ENCODE measurements at regions of chr12 and their contacts with region 1.

Region 1: DNA sequence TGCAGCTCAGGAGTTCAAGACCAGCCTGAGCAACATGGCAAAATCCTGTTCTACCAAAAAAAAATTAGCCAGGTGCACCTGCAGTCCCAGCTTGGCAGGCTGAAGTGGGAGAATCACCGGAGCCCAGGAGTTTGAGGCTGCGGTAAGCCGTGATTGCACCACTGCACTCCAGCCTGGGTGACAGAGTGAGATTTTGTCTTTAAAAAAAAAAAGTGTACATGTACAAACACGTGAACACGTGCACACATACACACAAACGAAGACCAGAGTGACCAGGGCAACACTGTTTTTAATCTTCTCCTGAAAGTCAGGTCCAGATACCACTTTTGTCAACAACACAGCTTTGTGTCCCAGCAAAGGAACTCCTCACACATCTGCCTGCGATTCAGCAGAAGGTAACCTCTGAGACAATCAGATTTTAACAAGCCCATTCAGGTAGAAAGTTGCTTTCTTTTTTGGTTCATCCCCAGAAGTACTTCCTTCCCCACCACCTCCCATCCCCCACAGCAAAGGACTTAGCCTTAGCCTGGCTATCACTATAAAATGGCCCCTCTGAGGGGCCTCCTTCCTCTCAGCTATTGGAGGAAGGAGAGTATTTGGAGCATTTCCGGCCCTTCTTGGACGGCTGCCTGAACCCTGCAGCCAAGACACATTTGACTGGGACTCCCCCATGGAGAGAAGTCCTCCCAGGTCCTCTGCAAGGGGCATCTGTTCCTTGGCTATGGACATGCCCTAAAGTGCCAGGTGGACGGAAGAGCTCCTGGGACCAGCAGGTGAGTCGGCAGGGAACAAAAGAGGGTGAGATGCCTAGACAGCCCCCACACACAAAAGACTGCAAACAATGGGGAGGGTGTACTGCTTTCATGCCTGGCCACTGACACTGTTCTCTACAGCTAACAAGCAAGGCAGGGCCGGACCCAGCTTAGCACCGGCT is 9.8 kb downstream of the CTDSP2 start:
- DNase-seq: peak in 6 of 9 donors; percentile 25 to 51 (median 39)
- ATAC-seq: peak; percentile 29
- H3K4me3 ChIP-seq: peak overlapping the region; percentile 53
- H3K4me3 Mint-ChIP-seq: peak overlapping the region; percentile 58 to 97 (median 76)
- H3K27ac ChIP-seq: peak overlapping the region; percentile 89
- H3K27ac Mint-ChIP-seq: peak overlapping the region; percentile 87 to 97 (median 94)
- H3K4me1 ChIP-seq: peaks cover 91 to 95% of the 10 kb centered on the region in 2 donors
- H3K4me1 Mint-ChIP-seq: peaks cover 73 to 99% (median 91%) of the 10 kb centered on the region in 7 donors
- H3K27me3 ChIP-seq: no peaks in the 10 kb centered on the region
- H3K27me3 Mint-ChIP-seq: no peaks in the 10 kb centered on the region

Region 2: GRCh38 chr12:57803319-57803893 is 33.3 kb before region 1 on chr12:
- CTCF ChIA-PET with region 1: interaction called, 4 read pairs
- POLR2A ChIA-PET with region 1: interaction called, 3 read pairs
- intact Hi-C with region 1: loop called in 1 of 2 experiments (anchors 1 kb)
- DNase-seq: peak in 6 of 9 donors; percentile 23 to 46 (median 35)
- ATAC-seq: peak; percentile 60
- H3K4me3 ChIP-seq: no peak overlapping the region
- H3K4me3 Mint-ChIP-seq: no peak overlapping the region
- H3K27ac ChIP-seq: no peak overlapping the region
- H3K27ac Mint-ChIP-seq: peak overlapping the region in 1 of 9 donors; percentile 21
- H3K4me1 ChIP-seq: no peaks in the 10 kb centered on the region
- H3K4me1 Mint-ChIP-seq: peaks cover 0 to 7% (median 0%) of the 10 kb centered on the region in 7 donors
- H3K27me3 ChIP-seq: no peaks in the 10 kb centered on the region
- H3K27me3 Mint-ChIP-seq: no peaks in the 10 kb centered on the region

Region 3: GRCh38 chr12:57865090-57865751 is 28.5 kb after region 1 on chr12:
- CTCF ChIA-PET with region 1: interaction called, 3 read pairs
- POLR2A ChIA-PET with region 1: interaction called, 3 read pairs
- intact Hi-C with region 1: loop called in 1 of 2 experiments (anchors 2 kb)
- DNase-seq: peak in 4 of 9 donors; percentile 21 to 68 (median 42)
- ATAC-seq: peak; percentile 83
- H3K4me3 ChIP-seq: peak overlapping the region; percentile 50
- H3K4me3 Mint-ChIP-seq: peak overlapping the region; percentile 77 to 94 (median 85)
- H3K27ac ChIP-seq: no peak overlapping the region
- H3K27ac Mint-ChIP-seq: peak overlapping the region in 5 of 9 donors; percentile 31 to 82 (median 47)
- H3K4me1 ChIP-seq: no peaks in the 10 kb centered on the region
- H3K4me1 Mint-ChIP-seq: peaks cover 4 to 10% (median 9%) of the 10 kb centered on the region in 7 donors
- H3K27me3 ChIP-seq: no peaks in the 10 kb centered on the region
- H3K27me3 Mint-ChIP-seq: peaks cover 11 to 26% (median 20%) of the 10 kb centered on the region in 5 donors

Region 4: GRCh38 chr12:57941165-57941894 is 104.6 kb after region 1 on chr12 and contains the start of gene ATP23:
- CTCF ChIA-PET with region 1: no interaction called
- POLR2A ChIA-PET with region 1: interaction called, 3 read pairs
- intact Hi-C with region 1: loop called in 1 of 2 experiments (anchors 2 kb)
- DNase-seq: peak; percentile 82 to 95 (median 90)
- ATAC-seq: peak; percentile 96
- H3K4me3 ChIP-seq: peak within 1 kb of the TSS; percentile 84
- H3K4me3 Mint-ChIP-seq: peak within 1 kb of the TSS; percentile 87 to 100 (median 98)
- H3K27ac ChIP-seq: peak within 1 kb of the TSS; percentile 90
- H3K27ac Mint-ChIP-seq: peak within 1 kb of the TSS; percentile 93 to 100 (median 99)
- H3K4me1 ChIP-seq: peaks cover 20 to 28% of the 10 kb centered on the region in 2 donors
- H3K4me1 Mint-ChIP-seq: peaks cover 24 to 54% (median 47%) of the 10 kb centered on the region in 7 donors
- H3K27me3 ChIP-seq: no peaks in the 10 kb centered on the region
- H3K27me3 Mint-ChIP-seq: no peaks in the 10 kb centered on the region
- total RNA-seq, gene ATP23: 7.2 to 12.3 (median 8.2) TPM

Measured in naive thymus-derived CD4-positive, alpha-beta T cell (primary cell).